ENCODE measurements at regions of chr9 and their contacts with region 1.

Region 1: DNA sequence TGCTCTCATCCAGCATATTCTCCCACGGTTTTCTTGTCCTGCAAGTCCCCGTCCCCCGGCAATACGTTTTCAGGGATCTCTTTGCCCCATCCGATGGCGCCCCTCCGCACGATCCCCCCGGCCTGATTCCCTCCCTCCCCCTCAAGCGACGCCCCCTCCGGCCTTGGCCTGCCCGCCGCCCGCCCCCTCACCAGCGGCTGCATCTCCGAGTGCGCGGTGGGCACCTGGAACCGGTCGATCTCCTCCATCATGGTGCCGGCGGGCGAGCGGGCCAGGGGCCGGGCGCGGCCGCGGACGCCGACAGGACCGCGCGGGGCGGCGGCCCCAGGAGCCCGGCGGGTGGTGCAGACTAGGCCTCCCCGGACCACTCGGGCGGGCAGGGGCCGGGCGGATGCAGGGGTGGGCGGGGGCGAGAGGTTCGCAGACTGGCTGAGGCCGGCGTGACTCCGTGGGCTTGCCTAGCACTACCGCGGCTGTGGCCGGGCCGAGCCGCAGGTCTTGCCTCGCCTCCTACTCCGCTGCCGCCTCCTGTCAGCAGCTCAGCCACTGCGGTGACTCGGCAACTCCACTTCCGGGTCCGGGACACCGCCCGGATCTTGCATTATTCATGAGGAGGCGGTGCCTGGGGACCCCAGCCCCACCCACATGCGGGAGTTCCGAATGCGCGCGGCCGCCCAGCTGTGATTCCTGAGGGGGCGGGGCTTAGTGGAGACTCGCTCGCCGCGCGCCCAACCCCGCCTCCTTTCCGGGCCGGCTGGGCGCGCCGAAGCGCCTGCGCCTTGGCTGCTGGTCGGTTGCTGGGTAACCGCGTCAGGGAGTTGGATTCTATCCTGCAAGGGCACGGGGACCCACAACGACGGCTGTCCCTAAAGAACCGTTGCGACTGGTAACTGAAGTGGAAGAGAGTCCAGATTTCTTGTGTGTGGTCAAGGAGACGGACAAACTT is at the starts of genes DNAI1 and FAM219A:
- DNase-seq: peak; percentile 99
- ATAC-seq: peak; percentile 92
- H3K4me3 Mint-ChIP-seq: peak within 1 kb of the TSS; percentile 84
- H3K27ac Mint-ChIP-seq: peak within 1 kb of the TSS; percentile 75
- H3K4me1 Mint-ChIP-seq: peaks cover 45% of the 10 kb centered on the region
- H3K27me3 Mint-ChIP-seq: peaks cover 9% of the 10 kb centered on the region
- total RNA-seq, gene DNAI1: 0.34 TPM in 1 of 2 experiments, not detected in the other
- total RNA-seq, gene FAM219A: 9.7 to 12.9 TPM

Region 2: GRCh38 chr9:34048923-34049697 is 409.2 kb before region 1 on chr9:
- CTCF ChIA-PET with region 1: interaction called, 3 read pairs
- POLR2A ChIA-PET with region 1: interaction called, 3 read pairs
- intact Hi-C with region 1: loop called in 1 of 2 experiments (anchors 1 kb)
- DNase-seq: peak; percentile 98
- ATAC-seq: peak; percentile 84
- H3K4me3 Mint-ChIP-seq: peak overlapping the region; percentile 90
- H3K27ac Mint-ChIP-seq: peak overlapping the region; percentile 99
- H3K4me1 Mint-ChIP-seq: peaks cover 38% of the 10 kb centered on the region
- H3K27me3 Mint-ChIP-seq: no peaks in the 10 kb centered on the region

Region 3: DNA sequence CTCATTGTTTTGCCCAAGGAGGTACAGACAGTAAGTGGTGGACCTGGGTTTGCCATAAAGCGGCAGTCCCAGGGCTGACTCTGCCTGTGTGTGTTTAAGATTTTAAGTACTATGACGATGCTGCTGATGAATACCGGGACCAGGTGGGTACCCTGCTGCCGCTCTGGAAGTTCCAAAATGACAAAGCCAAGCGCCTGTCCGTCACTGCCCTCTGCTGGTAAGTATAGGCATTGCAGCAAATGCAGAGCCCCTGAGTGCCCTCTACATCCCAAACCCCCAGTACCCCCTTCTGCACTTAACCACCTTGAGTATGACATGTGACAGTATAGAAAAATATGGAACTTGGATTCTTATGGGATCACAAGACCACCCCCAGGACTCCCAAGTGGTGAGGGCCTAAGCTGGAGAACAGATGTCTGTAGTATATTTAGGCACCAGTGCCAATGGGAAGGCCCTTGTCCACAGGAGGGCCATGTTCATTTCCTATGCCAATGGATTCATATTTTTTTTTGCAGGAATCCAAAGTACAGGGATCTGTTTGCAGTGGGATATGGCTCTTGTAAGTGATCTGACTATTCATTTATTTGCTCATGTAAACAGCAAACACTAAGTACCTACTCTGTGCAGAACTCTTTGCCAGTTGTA is 42.5 kb after region 1 on chr9:
- CTCF ChIA-PET with region 1: interaction called, 7 read pairs
- POLR2A ChIA-PET with region 1: interaction called, 3 read pairs
- intact Hi-C with region 1: loop called (anchors 1 to 5 kb)
- DNase-seq: peak; percentile 90
- ATAC-seq: peak; percentile 99
- H3K4me3 Mint-ChIP-seq: no peak overlapping the region
- H3K27ac Mint-ChIP-seq: no peak overlapping the region
- H3K4me1 Mint-ChIP-seq: peaks cover 14% of the 10 kb centered on the region
- H3K27me3 Mint-ChIP-seq: peaks cover 9% of the 10 kb centered on the region

Region 4: DNA sequence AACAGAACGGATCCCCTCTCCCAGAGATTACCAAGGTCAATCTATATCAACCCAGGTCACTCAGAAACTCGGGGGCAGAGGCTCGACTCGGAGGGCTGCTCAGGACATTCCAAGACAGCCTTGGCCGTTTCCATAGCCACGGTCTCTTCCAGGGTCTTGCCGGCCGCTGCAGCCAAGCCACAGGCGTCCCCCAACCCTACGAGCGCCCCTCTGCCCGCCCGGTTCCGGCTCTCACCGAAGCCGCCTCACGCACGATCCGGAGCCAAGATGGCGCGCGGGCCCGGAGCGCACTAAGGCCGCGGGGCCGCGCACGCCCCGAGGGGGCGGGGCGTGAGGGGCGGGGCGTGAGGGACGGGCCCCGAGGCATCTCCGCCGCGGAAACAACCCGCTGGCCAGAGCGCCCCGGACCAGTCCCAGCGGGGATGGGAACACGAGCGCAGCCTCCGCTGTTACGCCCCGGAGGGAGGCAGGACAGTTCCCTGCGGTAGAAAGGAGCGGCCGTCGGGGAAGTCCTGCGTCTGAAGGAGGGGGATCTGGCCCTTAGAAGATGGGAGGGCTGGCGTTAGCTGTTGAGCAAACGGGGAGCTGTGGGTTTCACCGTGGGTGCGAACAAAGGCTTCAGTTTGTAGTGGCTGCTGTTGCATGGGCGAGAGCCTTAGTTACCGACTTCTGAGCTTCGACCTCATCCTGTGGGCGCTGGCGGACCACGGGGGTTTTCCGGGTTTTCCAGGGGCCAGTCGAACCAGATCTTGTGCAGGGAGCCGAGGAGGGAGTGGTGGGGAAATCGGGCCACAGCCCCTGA is 153.7 kb after region 1 on chr9 and contains the start of gene RPP25L:
- CTCF ChIA-PET with region 1: no interaction called
- POLR2A ChIA-PET with region 1: no interaction called
- intact Hi-C with region 1: loop called (anchors 1 to 2 kb)
- DNase-seq: peak; percentile 91
- ATAC-seq: peak; percentile 97
- H3K4me3 Mint-ChIP-seq: peak within 1 kb of the TSS; percentile 86
- H3K27ac Mint-ChIP-seq: peak within 1 kb of the TSS; percentile 93
- H3K4me1 Mint-ChIP-seq: peaks cover 16% of the 10 kb centered on the region
- H3K27me3 Mint-ChIP-seq: no peaks in the 10 kb centered on the region
- total RNA-seq, gene RPP25L: 29.3 to 35.2 TPM

Region 5: DNA sequence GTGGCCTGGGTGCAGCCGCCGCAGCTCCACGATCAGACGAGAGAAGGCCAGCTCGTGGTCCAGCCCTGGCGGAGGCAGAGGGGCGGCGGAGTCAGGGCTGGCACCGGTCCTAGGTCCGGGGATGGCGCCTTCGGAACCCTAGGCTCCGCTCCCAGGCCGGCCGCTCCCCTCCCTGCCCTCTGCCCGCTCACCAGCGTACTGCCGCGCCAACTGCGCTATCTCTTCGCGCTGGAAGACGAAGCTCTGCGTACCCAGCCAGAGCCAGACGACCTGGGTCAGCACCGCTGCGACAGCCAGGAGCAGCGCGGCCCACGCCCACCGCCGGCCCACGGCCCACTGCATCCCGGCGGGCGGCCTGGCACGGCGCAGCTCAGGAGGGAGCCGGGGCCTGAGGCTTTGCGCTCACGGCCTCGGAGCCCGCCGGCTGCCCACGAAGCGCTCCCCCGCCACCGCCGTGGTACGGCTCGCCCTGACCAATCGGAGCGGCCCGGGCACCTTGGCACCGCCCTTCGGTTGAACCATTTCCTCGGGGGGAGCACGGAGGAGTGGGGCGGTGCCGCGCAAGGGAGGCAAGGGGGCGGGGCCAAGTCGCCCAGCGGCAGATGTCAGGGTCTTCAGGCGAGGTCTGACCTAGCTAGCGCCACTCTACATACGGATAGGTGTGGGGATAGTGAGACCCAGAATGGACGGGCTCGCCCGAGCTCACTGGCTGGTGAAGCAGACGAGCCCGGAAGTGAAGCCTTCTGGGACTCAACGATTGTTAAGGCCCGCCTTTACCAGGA is 179.3 kb after region 1 on chr9 and contains the start of gene SIGMAR1:
- CTCF ChIA-PET with region 1: no interaction called
- POLR2A ChIA-PET with region 1: interaction called, 4 read pairs
- intact Hi-C with region 1: loop called (anchors 1 to 5 kb)
- DNase-seq: peak; percentile 96
- ATAC-seq: peak; percentile 94
- H3K4me3 Mint-ChIP-seq: peak within 1 kb of the TSS; percentile 84
- H3K27ac Mint-ChIP-seq: peak within 1 kb of the TSS; percentile 92
- H3K4me1 Mint-ChIP-seq: peaks cover 40% of the 10 kb centered on the region
- H3K27me3 Mint-ChIP-seq: no peaks in the 10 kb centered on the region
- total RNA-seq, gene SIGMAR1: 63.6 to 68.0 TPM

Region 6: GRCh38 chr9:34793428-34793827 is 335.1 kb after region 1 on chr9:
- CTCF ChIA-PET with region 1: no interaction called
- POLR2A ChIA-PET with region 1: no interaction called
- intact Hi-C with region 1: no loop called
- DNase-seq: no peak
- ATAC-seq: no peak
- H3K4me3 Mint-ChIP-seq: no peak overlapping the region
- H3K27ac Mint-ChIP-seq: no peak overlapping the region
- H3K4me1 Mint-ChIP-seq: no peaks in the 10 kb centered on the region
- H3K27me3 Mint-ChIP-seq: peaks cover 45% of the 10 kb centered on the region

Region 7: DNA sequence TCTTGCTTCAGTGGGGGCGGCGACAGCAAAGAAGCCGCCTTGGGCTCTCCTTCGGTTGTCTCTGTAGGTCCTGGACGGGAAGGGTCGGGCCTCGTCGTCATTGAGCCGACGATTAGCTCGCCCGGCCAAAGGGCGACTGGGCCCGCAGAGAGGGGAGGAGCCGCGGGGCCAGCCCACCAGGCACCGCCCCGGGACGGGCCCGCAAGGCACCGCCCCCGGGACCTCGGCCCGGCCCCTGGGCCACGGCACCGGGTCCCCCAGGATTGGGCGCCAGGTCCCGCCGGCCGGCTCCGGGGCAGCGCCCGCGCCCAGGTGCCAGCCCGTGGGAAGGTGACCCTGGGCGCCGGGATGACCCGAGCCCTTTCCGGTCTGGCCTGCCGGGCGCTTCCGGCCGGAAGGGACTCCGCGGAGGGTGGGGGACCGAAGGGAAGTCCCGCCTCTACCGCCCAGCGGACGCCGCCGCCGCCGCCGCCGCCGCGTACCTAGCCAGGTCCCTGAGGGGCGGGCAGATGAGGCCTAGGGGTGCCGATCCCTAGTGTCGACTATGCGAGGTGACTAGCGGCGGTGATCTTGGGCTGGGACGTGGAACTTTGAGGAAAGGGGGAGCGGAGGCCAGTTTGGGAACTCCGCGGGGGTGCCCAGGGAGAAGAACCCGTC is 1290.7 kb after region 1 on chr9 and contains the starts of genes GBA2 and RGP1:
- CTCF ChIA-PET with region 1: no interaction called
- POLR2A ChIA-PET with region 1: no interaction called
- intact Hi-C with region 1: loop called in 1 of 2 experiments (anchors 5 kb)
- DNase-seq: peak; percentile 83
- ATAC-seq: peak; percentile 79
- H3K4me3 Mint-ChIP-seq: peak within 1 kb of the TSS; percentile 93
- H3K27ac Mint-ChIP-seq: peak within 1 kb of the TSS; percentile 88
- H3K4me1 Mint-ChIP-seq: peaks cover 40% of the 10 kb centered on the region
- H3K27me3 Mint-ChIP-seq: no peaks in the 10 kb centered on the region
- total RNA-seq, gene GBA2: 19.6 to 23.7 TPM
- total RNA-seq, gene RGP1: 14.0 to 15.5 TPM

Measured in activated CD4-positive, alpha-beta T cell treated with anti-CD3 and anti-CD28 coated beads for 36 hours (primary cell).